Heart right ventricle (tissue), 16 donors: ENCODE measurements at regions of chr13 and their contacts with region 1.

Region 1: GRCh38 chr13:24995226-24995804 is 100.6 kb upstream of the PABPC3 start:
- DNase-seq: peak in 1 of 2 donors; percentile 57
- ATAC-seq: peak in 6 of 8 donors; percentile 46 to 82 (median 71)
- H3K4me3 ChIP-seq: no peak overlapping the region
- H3K27ac ChIP-seq: no peak overlapping the region
- H3K4me1 ChIP-seq: no peaks in the 10 kb centered on the region
- H3K27me3 ChIP-seq: peaks cover 0 to 38% (median 16%) of the 10 kb centered on the region in 7 donors
- CTCF ChIP-seq: peak; percentile 37 to 83 (median 78)

Region 2: DNA sequence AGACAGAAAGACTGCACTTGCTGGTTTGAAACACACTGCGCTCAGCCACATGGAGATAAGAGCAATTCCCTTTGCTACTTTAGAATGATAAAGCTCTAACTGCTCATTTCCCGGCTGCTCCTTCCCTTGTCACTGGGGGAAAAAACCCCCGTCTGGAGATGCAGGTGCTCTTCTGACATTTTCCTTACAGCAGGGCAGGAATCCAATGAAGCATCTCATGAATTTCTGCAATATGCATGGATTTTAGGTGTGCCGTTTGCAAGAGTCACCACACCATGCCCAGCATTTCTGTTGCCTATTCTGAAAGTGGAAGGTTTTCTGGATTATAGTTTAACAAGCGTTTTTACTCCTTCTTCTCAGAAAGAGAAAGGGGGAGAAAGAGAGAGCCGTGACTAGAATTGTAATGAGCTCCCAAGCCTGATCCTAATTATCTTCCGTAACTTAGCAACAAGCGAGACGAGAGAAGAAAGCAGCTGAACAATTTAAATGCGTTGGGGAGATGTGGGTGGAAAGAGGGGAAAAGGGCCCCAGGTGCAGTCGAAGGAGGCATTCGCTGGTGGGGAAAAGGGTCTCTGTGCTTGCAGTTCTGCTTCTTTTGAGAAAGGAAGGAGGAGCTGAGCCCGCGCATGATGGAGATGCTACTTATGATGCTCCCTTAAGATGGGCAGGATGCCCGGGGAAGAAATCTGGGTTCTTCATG is 911.4 kb before region 1 on chr13:
- intact Hi-C with region 1: no loop called
- DNase-seq: no peak
- ATAC-seq: no peak
- H3K4me3 ChIP-seq: no peak overlapping the region
- H3K27ac ChIP-seq: no peak overlapping the region
- H3K4me1 ChIP-seq: peaks cover 0 to 24% (median 14%) of the 10 kb centered on the region in 9 donors
- H3K27me3 ChIP-seq: no peaks in the 10 kb centered on the region
- CTCF ChIP-seq: no peak

Region 3: DNA sequence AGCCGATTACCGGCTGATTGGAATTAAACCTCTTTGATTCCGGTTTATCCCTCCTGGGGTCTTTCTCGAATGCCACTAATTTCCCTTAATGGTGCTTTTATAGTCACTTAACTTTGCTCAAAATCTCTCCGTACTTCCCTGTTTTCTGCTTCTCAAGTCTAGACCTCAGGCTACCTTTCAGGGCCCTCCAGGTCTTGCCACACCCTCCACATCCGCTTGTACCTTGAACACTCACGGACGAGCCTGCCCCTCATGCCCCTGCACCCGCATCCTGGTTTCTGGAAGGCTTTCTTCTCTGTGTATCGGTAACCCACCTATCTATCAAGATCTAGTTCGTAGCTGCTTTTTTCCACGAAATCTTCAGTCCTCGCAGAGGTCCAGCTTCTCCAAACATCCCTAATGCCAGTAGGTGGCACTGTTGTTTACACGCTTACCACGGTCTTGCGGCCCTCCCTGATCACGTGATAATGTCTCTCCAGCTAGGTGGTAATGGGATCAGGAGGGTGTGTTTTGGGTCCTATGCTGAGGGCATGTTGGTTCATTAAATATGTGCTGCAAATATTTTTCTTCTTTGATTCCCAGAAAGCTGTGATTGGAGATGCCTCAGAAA is 301.3 kb before region 1 on chr13:
- intact Hi-C with region 1: loop called in 2 of 10 experiments (anchors 10 kb)
- DNase-seq: peak in 1 of 2 donors; percentile 38
- ATAC-seq: peak in 6 of 8 donors; percentile 68 to 78 (median 73)
- H3K4me3 ChIP-seq: no peak overlapping the region
- H3K27ac ChIP-seq: no peak overlapping the region
- H3K4me1 ChIP-seq: no peaks in the 10 kb centered on the region
- H3K27me3 ChIP-seq: peaks cover 0 to 40% (median 26%) of the 10 kb centered on the region in 7 donors
- CTCF ChIP-seq: peak; percentile 36 to 74 (median 73)

Region 4: GRCh38 chr13:24905242-24905641 is 90.1 kb before region 1 on chr13:
- intact Hi-C with region 1: no loop called
- DNase-seq: no peak
- ATAC-seq: no peak
- H3K4me3 ChIP-seq: no peak overlapping the region
- H3K27ac ChIP-seq: no peak overlapping the region
- H3K4me1 ChIP-seq: peaks cover 0 to 4% (median 0%) of the 10 kb centered on the region in 9 donors
- H3K27me3 ChIP-seq: no peaks in the 10 kb centered on the region
- CTCF ChIP-seq: no peak

Region 5: DNA sequence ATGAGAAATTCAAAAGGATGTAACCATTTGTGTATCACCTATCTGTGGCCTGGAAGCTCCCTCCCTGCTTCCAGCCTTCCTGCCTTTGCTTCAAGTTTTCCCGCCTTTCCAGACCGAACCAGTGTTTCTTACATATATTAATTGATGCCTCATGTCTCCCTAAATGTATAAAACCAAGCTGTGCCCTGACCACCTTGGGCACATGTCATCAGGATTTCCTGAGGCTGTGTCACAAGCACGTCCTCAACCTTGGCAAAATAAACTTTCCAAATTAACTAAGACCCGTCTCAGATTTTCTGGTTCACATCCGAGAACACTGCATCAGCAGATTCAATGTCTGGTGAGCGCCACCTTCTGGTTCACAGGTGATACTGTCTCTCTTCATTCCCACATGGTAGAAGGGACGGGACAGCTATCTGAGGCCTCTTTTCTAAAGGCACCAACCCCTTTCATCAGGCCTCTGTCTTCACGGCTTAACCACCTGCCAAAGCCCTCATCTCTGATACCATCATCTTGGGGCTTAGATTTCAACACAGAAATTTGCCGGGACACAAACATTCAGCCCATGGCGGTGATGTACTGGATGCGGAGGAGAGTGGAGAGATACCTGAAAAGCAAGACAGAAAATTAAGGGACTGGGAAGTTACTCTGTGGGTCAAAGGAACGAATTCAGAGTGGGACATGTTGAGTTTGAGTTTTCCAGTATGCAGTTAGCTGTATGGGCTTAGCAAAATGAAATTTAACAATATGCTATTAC is 41.9 kb after region 1 on chr13:
- intact Hi-C with region 1: loop called in 5 of 10 experiments (anchors 5 kb)
- DNase-seq: peak in 1 of 2 donors; percentile 50
- ATAC-seq: peak in 6 of 8 donors; percentile 61 to 77 (median 65)
- H3K4me3 ChIP-seq: no peak overlapping the region
- H3K27ac ChIP-seq: no peak overlapping the region
- H3K4me1 ChIP-seq: no peaks in the 10 kb centered on the region
- H3K27me3 ChIP-seq: peaks cover 0 to 65% (median 43%) of the 10 kb centered on the region in 7 donors
- CTCF ChIP-seq: peak; percentile 45 to 81 (median 76)

Region 6: DNA sequence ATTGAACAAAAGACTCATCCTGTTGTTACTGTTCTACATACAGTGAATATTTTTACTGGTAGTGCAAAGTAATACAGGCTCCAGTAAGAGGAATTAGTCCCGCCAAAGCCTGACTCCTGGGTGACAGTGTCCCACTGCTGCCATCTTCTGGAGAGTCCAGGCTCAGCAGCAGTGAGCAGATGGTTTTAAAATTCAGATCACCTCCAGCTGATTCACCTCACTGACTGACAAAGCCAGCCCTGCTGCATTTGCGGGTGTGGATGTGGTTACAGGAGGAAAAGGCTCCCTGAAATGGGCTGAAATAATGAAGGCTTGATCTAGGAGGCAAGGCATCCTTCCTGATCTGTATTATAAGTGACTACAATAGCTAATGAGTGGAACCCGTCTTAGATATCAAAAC is 118.9 kb after region 1 on chr13:
- intact Hi-C with region 1: loop called in 6 of 10 experiments (anchors 10 kb)
- DNase-seq: peak; percentile 37 to 48
- ATAC-seq: peak in 4 of 8 donors; percentile 61 to 82 (median 71)
- H3K4me3 ChIP-seq: no peak overlapping the region
- H3K27ac ChIP-seq: no peak overlapping the region
- H3K4me1 ChIP-seq: no peaks in the 10 kb centered on the region
- H3K27me3 ChIP-seq: peaks cover 0 to 49% (median 28%) of the 10 kb centered on the region in 7 donors
- CTCF ChIP-seq: peak; percentile 42 to 83 (median 79)